ENCODE measurements at regions of chr15 and their contacts with region 1.

Region 1: DNA sequence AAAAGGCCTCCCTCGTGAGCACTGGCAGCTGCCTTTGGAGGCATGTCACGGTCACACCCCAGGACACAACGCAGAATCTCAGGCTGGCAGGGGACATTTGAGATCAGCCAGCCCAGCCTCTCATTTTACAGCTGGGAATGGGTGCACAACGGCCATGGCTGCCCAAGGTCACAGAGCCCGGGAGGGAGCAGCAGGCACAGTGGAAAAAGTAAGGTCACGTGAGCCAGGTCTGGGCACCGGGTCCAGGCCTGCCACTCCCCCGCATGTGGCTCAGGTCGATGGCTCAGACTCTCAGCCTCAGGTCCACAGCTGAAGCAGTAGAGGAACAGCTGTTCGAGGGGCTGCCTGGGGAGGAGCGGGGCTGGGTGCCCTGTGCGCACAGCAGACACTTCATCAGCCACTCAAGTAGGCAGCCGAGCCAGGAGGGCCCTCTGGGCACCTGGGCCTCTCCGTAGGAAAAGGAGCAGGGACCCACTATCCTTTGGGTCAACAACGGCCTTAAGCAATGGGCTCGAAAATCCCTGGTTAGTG is 260.6 kb downstream of the GOLGA6L6 start:
- DNase-seq: peak; percentile 21
- ATAC-seq: no peak
- H3K4me3 Mint-ChIP-seq: no peak overlapping the region
- H3K27ac Mint-ChIP-seq: no peak overlapping the region
- H3K4me1 Mint-ChIP-seq: no peaks in the 10 kb centered on the region
- H3K27me3 Mint-ChIP-seq: no peaks in the 10 kb centered on the region

Region 2: GRCh38 chr15:20294651-20295237 is 13.7 kb after region 1 on chr15:
- CTCF ChIA-PET with region 1: no interaction called
- POLR2A ChIA-PET with region 1: no interaction called
- intact Hi-C with region 1: loop called in 1 of 2 experiments (anchors 1 kb)
- DNase-seq: no peak
- ATAC-seq: no peak
- H3K4me3 Mint-ChIP-seq: no peak overlapping the region
- H3K27ac Mint-ChIP-seq: no peak overlapping the region
- H3K4me1 Mint-ChIP-seq: no peaks in the 10 kb centered on the region
- H3K27me3 Mint-ChIP-seq: no peaks in the 10 kb centered on the region

Region 3: GRCh38 chr15:20305040-20305392 is 24.0 kb after region 1 on chr15:
- CTCF ChIA-PET with region 1: no interaction called
- POLR2A ChIA-PET with region 1: no interaction called
- intact Hi-C with region 1: no loop called
- DNase-seq: no peak
- ATAC-seq: no peak
- H3K4me3 Mint-ChIP-seq: no peak overlapping the region
- H3K27ac Mint-ChIP-seq: no peak overlapping the region
- H3K4me1 Mint-ChIP-seq: no peaks in the 10 kb centered on the region
- H3K27me3 Mint-ChIP-seq: no peaks in the 10 kb centered on the region

Region 4: DNA sequence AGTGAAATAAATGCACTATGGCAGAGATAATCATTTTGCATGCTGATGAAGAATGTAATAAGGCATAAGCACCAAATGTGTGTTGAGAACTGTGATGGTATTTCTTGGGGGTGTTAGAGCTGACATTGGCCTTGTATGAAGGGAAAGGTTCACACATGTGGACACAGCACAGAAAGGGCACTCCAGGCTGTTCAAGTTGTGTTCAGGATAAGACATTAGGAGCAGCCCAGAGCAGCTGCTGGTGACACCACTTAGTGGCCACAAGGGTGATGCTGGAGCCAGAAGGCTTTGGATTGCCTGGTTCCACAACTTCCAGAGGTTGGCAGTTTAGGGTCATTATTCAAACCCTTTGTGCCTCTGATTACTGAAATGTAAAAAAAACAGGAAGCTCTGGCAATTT is 105.2 kb after region 1 on chr15:
- CTCF ChIA-PET with region 1: no interaction called
- POLR2A ChIA-PET with region 1: no interaction called
- intact Hi-C with region 1: no loop called
- DNase-seq: no peak
- ATAC-seq: no peak
- H3K4me3 Mint-ChIP-seq: no peak overlapping the region
- H3K27ac Mint-ChIP-seq: no peak overlapping the region
- H3K4me1 Mint-ChIP-seq: no peaks in the 10 kb centered on the region
- H3K27me3 Mint-ChIP-seq: no peaks in the 10 kb centered on the region